Breast epithelium (tissue), 4 donors: ENCODE measurements at regions of chr10 and their contacts with region 1.

Region 1: DNA sequence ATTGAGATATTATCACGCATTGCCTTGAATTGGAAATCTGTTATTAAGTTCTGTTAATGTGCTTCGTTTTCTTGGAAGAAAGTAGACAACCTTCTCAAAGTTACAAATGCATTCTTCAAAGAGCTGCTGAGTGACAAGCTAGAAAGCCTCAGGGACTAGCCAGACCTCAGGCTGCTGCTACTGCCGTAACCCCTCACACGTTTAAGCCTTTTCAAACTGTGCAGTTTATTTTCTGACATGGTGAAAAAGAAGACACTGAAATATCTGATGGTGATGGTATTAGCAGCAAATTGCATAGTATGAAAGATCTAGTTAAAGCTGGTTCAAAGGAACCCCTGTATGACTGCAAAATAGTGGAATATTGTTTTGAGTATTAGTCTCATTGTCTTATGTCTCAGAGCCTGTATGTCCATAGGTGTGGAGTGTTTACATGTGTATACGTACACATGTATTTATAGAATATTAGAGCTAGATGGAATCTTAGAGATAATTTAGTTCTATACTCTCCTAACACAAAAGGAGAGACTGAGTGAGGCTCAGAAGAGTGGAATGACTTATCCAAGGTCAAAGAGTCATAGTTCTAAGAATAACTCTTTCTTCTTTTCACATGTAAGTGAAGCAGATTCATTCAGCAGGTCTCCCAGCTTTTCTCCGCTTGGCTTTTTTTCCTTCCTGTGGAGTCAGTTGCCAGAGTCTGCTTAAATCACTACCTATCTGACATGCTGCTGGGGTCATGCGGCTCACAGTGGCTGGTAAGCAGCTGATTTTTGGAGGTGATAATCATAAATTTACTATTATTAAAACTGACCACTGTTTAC is 431.9 kb downstream of the PLXDC2 start:
- DNase-seq: no peak
- H3K4me3 ChIP-seq: no peak overlapping the region
- H3K27ac ChIP-seq: no peak overlapping the region
- H3K4me1 ChIP-seq: no peaks in the 10 kb centered on the region
- H3K27me3 ChIP-seq: no peaks in the 10 kb centered on the region
- CTCF ChIP-seq: no peak
- POLR2A ChIP-seq: no peak

Region 2: GRCh38 chr10:20162123-20162522 is 86.0 kb before region 1 on chr10:
- intact Hi-C with region 1: no loop called
- DNase-seq: no peak
- H3K4me3 ChIP-seq: no peak overlapping the region
- H3K27ac ChIP-seq: no peak overlapping the region
- H3K4me1 ChIP-seq: no peaks in the 10 kb centered on the region
- H3K27me3 ChIP-seq: no peaks in the 10 kb centered on the region
- CTCF ChIP-seq: no peak
- POLR2A ChIP-seq: no peak

Region 3: GRCh38 chr10:20215547-20216152 is 32.5 kb before region 1 on chr10:
- intact Hi-C with region 1: loop called (anchors 2 kb)
- DNase-seq: no peak
- H3K4me3 ChIP-seq: no peak overlapping the region
- H3K27ac ChIP-seq: no peak overlapping the region
- H3K4me1 ChIP-seq: no peaks in the 10 kb centered on the region
- H3K27me3 ChIP-seq: no peaks in the 10 kb centered on the region
- CTCF ChIP-seq: no peak
- POLR2A ChIP-seq: no peak